HepG2 (cell line): ENCODE measurements at regions of chr18 and their contacts with region 1.

Region 1: GRCh38 chr18:44758861-44759631 is 78.4 kb downstream of the SETBP1 start:
- DNase-seq: no peak
- ATAC-seq: no peak
- H3K4me3 ChIP-seq: no peak overlapping the region
- H3K27ac ChIP-seq: no peak overlapping the region
- H3K4me1 ChIP-seq: no peaks in the 10 kb centered on the region
- H3K27me3 ChIP-seq: no peaks in the 10 kb centered on the region; a peak in 1 of 5 replicates
- CTCF ChIP-seq: no peak
- EP300 ChIP-seq: no peak
- POLR2A ChIP-seq: no peak
- RAD21 ChIP-seq: no peak

Region 2: DNA sequence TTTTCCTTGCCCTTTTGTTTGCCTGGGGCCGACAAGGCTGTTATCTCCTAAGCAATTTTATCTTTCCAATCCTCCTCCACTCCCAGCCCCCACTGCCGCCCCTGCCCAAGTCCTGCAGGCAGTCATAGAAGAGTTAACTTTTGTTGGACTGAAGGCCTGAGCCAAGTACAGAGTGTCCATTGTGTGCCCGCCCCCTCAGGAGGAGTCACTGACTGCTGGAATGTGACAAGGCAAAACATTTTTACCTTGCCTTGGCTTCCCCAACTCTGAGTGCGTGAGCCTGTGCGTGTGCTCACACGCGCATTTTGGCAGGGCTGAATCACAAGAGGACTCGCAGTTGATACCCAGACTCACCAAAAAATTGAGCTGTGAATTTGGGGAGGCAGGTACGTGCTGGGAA is 62.2 kb before region 1 on chr18:
- CTCF ChIA-PET with region 1: no interaction called
- POLR2A ChIA-PET with region 1: no interaction called
- in situ Hi-C with region 1: no loop called
- intact Hi-C with region 1: loop called (anchors 10 kb)
- DNase-seq: no peak
- ATAC-seq: peak; percentile 86
- H3K4me3 ChIP-seq: no peak overlapping the region
- H3K27ac ChIP-seq: no peak overlapping the region
- H3K4me1 ChIP-seq: peaks cover 9% of the 10 kb centered on the region; the same call in 1 of the 2 replicates
- H3K27me3 ChIP-seq: 0 out of 5 replicates have a peak, but pooled peaks cover 0 to 2% of the 10 kb centered on the region in 2 experiments
- CTCF ChIP-seq: no peak
- EP300 ChIP-seq: no peak
- POLR2A ChIP-seq: no peak
- RAD21 ChIP-seq: no peak

Region 3: DNA sequence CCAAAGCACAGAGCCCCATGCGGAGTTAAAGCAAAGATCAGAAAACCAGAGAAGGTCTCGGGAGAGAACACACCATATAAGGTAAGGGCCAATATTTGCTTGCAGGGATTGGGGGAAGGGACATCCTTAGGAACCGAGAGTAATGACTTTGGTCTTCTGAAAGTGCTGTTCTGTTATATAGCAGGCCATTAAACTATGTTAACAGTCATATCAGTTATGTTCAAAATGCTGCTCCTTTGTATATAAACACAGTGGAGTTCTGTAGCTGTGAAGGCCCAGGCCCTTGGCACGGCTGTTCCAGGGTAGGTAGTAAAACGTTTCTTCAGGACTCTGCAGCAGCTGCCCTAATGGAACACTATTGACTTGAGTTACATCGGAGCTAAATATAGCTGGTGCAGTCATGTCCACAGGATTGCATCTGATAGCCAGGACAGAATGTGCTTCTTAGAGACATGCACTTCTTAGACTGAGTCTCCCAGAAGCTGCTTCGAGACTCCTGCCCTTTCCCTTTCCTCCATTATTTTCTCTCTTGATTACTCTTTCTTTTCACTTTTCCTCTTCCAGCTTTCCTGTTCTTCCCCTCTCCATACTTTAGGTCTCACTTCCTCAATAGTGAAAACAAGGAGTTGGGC is 44.1 kb after region 1 on chr18:
- CTCF ChIA-PET with region 1: no interaction called
- POLR2A ChIA-PET with region 1: no interaction called
- in situ Hi-C with region 1: no loop called
- intact Hi-C with region 1: no loop called
- DNase-seq: peak; percentile 15
- ATAC-seq: peak; percentile 78
- H3K4me3 ChIP-seq: no peak overlapping the region
- H3K27ac ChIP-seq: no peak overlapping the region
- H3K4me1 ChIP-seq: peaks cover 42% of the 10 kb centered on the region
- H3K27me3 ChIP-seq: no peaks in the 10 kb centered on the region
- CTCF ChIP-seq: no peak
- EP300 ChIP-seq: no peak
- POLR2A ChIP-seq: no peak
- RAD21 ChIP-seq: no peak